Sigmoid colon (tissue), 7 donors: ENCODE measurements at regions of chr22 and their contacts with region 1.

Region 1: GRCh38 chr22:30947816-30948454 is 20.6 kb downstream of the MORC2 start:
- DNase-seq: no peak
- H3K4me3 ChIP-seq: no peak overlapping the region
- H3K27ac ChIP-seq: peak overlapping the region; percentile 55 to 74 (median 64)
- H3K4me1 ChIP-seq: peaks cover 0 to 26% (median 22%) of the 10 kb centered on the region in 4 donors
- H3K27me3 ChIP-seq: no peaks in the 10 kb centered on the region
- CTCF ChIP-seq: peak; percentile 59 to 85 (median 74)
- EP300 ChIP-seq: no peak
- POLR2A ChIP-seq: no peak

Region 2: GRCh38 chr22:31080848-31081649 is 133.1 kb after region 1 on chr22 and contains the start of gene SMTN:
- intact Hi-C with region 1: loop called (anchors 1 kb)
- DNase-seq: peak; percentile 97
- H3K4me3 ChIP-seq: peak within 1 kb of the TSS; percentile 67 to 82 (median 80)
- H3K27ac ChIP-seq: peak within 1 kb of the TSS; percentile 96 to 100 (median 99)
- H3K4me1 ChIP-seq: peaks cover 0 to 51% (median 50%) of the 10 kb centered on the region in 4 donors
- H3K27me3 ChIP-seq: no peaks in the 10 kb centered on the region
- CTCF ChIP-seq: no peak
- EP300 ChIP-seq: no peak
- POLR2A ChIP-seq: peak; percentile 97
- total RNA-seq, gene SMTN: 987 to 1,789 (median 1,228) TPM

Region 3: GRCh38 chr22:31148953-31149627 is 201.2 kb after region 1 on chr22:
- intact Hi-C with region 1: loop called (anchors 2 kb)
- DNase-seq: peak; percentile 89
- H3K4me3 ChIP-seq: no peak overlapping the region
- H3K27ac ChIP-seq: peak overlapping the region; percentile 59 to 73 (median 68)
- H3K4me1 ChIP-seq: peaks cover 0 to 13% (median 5%) of the 10 kb centered on the region in 4 donors
- H3K27me3 ChIP-seq: no peaks in the 10 kb centered on the region
- CTCF ChIP-seq: peak; percentile 85 to 96 (median 88)
- EP300 ChIP-seq: no peak
- POLR2A ChIP-seq: no peak